GM18951 (cell line): ENCODE measurements at regions of chr5 and their contacts with region 1.

Region 1: GRCh38 chr5:174311531-174312269 is 266.2 kb downstream of the NSG2 start:
- POLR2A ChIP-seq: no peak

Region 2: GRCh38 chr5:173178369-173178910 is 1133.3 kb before region 1 on chr5:
- in situ Hi-C with region 1: no loop called
- POLR2A ChIP-seq: no peak

Region 3: GRCh38 chr5:173615884-173616576 is 695.7 kb before region 1 on chr5:
- in situ Hi-C with region 1: loop called (anchors 25 kb)
- POLR2A ChIP-seq: peak; percentile 31

Region 4: DNA sequence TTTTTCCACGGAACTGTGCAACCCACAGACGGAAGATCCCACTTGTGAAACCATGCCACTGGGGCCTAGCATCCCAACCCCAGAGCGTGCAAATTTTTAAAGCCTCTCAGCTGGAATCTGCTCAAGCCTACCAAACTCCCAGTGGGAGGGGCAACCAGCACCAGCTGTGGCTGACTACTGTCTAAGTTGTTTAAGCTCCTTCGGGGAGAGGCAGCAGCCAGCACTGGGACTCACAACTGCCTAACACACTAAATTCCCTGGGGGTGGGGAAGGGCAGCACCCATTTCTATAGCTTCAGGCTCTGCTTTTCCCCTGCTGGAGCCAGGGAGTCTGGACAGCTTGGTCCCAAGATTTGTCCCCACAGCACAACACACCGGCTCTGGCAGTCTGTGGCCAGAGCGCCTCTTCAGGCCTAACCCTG is 125.1 kb after region 1 on chr5:
- in situ Hi-C with region 1: no loop called
- POLR2A ChIP-seq: no peak

Region 5: DNA sequence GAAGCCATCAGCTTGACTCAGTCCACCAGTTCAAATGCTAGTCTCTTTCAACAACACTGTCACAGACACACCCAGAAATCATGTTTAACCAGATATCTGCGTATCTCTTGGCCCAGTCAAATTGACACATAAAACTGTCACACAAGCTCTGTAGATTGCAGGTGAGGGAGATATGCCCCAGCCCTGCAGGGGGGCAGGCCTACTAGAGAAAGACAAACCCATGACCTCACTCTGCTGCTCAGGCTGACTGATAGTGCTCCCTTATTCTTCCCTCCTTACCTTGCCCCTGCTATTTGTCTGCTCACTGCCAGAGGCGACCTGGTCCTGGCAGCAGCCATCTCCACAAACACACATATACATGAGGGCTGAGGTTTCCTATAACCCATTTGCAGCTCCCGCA is 781.0 kb after region 1 on chr5:
- in situ Hi-C with region 1: no loop called
- POLR2A ChIP-seq: no peak